Right ventricle myocardium inferior (tissue), 1 donor: ENCODE measurements at regions of chr7 and their contacts with region 1.

Region 1: GRCh38 chr7:65981965-65982792 is at the start of gene GUSB:
- DNase-seq: peak; percentile 95
- ATAC-seq: peak; percentile 97
- total RNA-seq, gene GUSB: 18.3 TPM

Region 2: DNA sequence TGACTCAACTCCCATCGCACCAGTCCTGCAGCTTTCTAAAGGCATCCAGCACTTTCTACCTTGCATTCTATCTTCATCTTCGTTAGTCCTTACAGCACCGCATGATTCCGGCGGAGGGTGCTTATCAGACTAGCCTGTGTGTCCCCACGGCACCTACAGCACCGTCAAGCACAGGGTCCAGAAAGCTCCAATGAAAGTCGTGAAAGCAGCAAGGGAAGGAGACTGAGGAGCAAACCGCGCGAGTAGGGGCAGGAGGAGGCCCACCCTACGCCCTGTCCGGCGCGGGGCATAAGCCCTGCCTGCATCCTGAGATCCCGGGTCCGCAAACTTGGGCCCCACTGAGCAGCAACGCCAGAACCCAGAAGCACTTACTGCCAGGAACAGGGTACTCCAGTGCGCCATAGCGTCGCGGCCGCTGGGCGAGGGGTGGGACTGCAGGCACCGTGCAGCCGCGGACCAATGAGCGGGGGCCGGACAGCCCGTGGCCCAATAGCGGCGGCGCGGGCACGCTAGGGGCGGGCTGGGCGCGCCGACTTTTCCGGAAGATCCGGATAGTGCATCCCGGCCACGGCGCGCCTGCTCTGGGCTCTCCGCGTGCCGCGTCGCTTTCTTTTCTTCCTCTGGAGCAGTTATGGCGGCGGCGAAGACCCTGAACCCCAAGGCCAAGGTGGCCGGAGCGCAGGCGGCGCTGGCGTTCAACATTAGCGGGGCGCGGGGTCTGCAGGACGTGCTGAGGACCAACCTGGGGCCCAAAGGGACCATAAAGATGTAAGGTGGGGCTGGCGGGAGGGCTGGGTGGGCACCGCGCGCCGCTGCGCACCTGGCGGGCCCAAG is 231.5 kb before region 1 on chr7:
- intact Hi-C with region 1: loop called (anchors 5 kb)
- DNase-seq: peak; percentile 97
- ATAC-seq: peak; percentile 100

Region 3: GRCh38 chr7:65872776-65873581 is 109.2 kb before region 1 on chr7 and contains the start of gene VKORC1L1:
- intact Hi-C with region 1: loop called (anchors 1 kb)
- DNase-seq: peak; percentile 98
- ATAC-seq: peak; percentile 98
- total RNA-seq, gene VKORC1L1: 20.8 TPM

Region 4: DNA sequence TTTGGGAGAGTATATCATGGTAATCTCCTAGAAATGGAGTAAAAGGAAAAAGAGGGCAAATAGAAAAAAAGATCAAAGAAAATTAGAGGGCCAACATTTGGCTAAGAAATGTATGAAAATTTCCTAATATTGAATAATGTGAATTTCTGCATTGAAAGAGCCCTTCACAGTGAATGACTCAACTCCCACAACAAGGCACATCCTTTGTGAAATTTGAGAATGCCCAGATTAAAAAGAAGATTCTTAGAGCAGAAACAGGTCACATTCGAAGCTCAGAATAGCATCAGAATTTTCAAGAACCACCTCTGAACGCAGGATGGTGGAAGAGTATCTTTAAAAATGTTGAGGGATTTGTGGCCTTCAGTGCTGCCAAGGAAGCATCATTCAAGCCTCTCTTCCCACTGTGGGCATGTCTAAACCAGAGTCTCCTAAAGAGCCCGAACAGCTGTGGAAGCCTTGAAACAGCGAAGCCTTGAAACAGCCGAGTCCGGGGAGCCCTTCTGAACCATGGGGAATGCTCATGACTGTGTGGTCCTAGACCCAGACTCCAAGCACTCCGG is 43.8 kb before region 1 on chr7:
- intact Hi-C with region 1: no loop called
- DNase-seq: no peak
- ATAC-seq: no peak